Gastrocnemius medialis (tissue), 4 donors: ENCODE measurements at regions of chr19 and their contacts with region 1.

Region 1: GRCh38 chr19:52897144-52897935 is at the start of gene ZNF320:
- DNase-seq: peak; percentile 85 to 93
- ATAC-seq: peak; percentile 99
- H3K4me3 ChIP-seq: peak within 1 kb of the TSS; percentile 66 to 96 (median 85)
- H3K27ac ChIP-seq: peak within 1 kb of the TSS; percentile 81 to 94 (median 88)
- H3K4me1 ChIP-seq: peaks cover 8 to 14% of the 10 kb centered on the region in 2 donors
- H3K27me3 ChIP-seq: no peaks in the 10 kb centered on the region
- CTCF ChIP-seq: no peak
- POLR2A ChIP-seq: peak; percentile 53 to 57
- total RNA-seq, gene ZNF320: 1.3 to 2.7 (median 2.5) TPM in 3 of 4 donors, not detected in the other

Region 2: DNA sequence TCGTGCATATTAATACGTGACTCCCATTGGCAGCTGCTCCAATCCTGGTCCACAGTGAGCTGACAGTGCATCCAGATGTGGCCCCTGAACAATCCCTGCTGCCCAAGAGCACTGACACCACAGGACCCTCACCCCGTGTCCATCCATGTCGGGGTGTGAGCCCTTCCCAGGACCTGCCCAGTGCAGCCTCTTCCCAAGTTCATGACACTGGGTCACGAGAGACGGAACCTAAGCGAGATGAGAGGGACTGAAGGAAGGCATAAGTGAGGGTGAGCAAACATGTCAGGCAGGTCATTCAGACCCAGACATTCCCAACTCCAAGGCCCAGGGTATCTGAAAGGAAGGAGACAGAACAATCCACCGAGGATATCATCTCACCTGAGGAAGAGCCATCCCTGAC is 43.5 kb before region 1 on chr19:
- in situ Hi-C with region 1: no loop called
- intact Hi-C with region 1: loop called (anchors 2 kb)
- DNase-seq: no peak
- ATAC-seq: no peak
- H3K4me3 ChIP-seq: no peak overlapping the region
- H3K27ac ChIP-seq: no peak overlapping the region
- H3K4me1 ChIP-seq: peaks cover 6 to 8% of the 10 kb centered on the region in 2 donors
- H3K27me3 ChIP-seq: no peaks in the 10 kb centered on the region
- CTCF ChIP-seq: no peak
- POLR2A ChIP-seq: no peak

Region 3: DNA sequence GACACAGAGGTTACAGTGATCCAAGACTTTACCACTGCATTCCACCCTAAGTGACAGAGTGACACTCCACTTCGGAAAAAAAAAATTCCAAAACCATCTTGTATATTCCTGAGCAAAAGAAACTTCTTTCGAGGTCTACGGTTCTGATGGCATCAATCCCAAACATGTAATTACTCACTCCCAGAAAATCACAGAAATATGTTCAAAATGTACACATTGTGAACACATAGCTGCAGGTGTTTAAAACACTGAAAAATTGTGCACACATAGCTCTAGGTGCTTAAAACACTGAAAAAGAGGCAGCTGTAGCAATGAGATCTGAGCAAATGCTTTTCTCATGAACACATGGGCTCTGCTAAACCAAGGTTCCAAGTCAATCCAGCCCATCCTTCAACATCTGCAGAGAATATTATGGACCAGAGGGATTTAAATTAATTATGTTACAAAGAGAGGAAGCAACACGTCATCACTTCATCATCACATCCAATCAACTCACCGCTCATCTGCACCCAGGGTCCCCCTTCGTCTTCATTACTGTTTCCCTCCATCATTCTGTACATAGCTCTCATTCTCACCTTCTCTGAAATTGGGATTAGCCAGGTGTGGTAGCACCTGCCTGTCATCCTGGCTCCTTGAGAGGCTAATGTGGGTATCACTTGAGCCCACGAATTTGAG is 25.8 kb before region 1 on chr19:
- in situ Hi-C with region 1: no loop called
- intact Hi-C with region 1: no loop called
- DNase-seq: no peak
- ATAC-seq: no peak
- H3K4me3 ChIP-seq: no peak overlapping the region
- H3K27ac ChIP-seq: no peak overlapping the region
- H3K4me1 ChIP-seq: no peaks in the 10 kb centered on the region
- H3K27me3 ChIP-seq: no peaks in the 10 kb centered on the region
- CTCF ChIP-seq: no peak
- POLR2A ChIP-seq: no peak

Region 4: GRCh38 chr19:52922841-52923777 is 25.8 kb after region 1 on chr19 and contains the start of gene ZNF888:
- in situ Hi-C with region 1: no loop called
- intact Hi-C with region 1: loop called (anchors 1 kb)
- DNase-seq: peak; percentile 48 to 64
- ATAC-seq: peak; percentile 68 to 86
- H3K4me3 ChIP-seq: peak within 1 kb of the TSS; percentile 65 to 83 (median 66)
- H3K27ac ChIP-seq: peak within 1 kb of the TSS; percentile 64 to 79 (median 70)
- H3K4me1 ChIP-seq: no peaks in the 10 kb centered on the region
- H3K27me3 ChIP-seq: peaks cover 0 to 7% (median 0%) of the 10 kb centered on the region in 3 donors
- CTCF ChIP-seq: no peak
- POLR2A ChIP-seq: peak; percentile 13 to 27
- total RNA-seq, gene ZNF888: 0.15 to 0.29 (median 0.20) TPM

Region 5: GRCh38 chr19:53795019-53795418 is 897.7 kb after region 1 on chr19:
- in situ Hi-C with region 1: no loop called
- intact Hi-C with region 1: no loop called
- DNase-seq: no peak
- ATAC-seq: no peak
- H3K4me3 ChIP-seq: no peak overlapping the region
- H3K27ac ChIP-seq: no peak overlapping the region
- H3K4me1 ChIP-seq: no peaks in the 10 kb centered on the region
- H3K27me3 ChIP-seq: no peaks in the 10 kb centered on the region
- CTCF ChIP-seq: no peak
- POLR2A ChIP-seq: no peak